CD4-positive, alpha-beta T cell (primary cell): ENCODE measurements at regions of chr1 and their contacts with region 1.

Region 1: GRCh38 chr1:25819576-25820246 is at the start of gene MTFR1L:
- DNase-seq: peak; percentile 87 to 97 (median 93)
- ATAC-seq: peak; percentile 85
- H3K4me3 ChIP-seq: peak within 1 kb of the TSS; percentile 97
- H3K4me3 Mint-ChIP-seq: peak within 1 kb of the TSS; percentile 98
- H3K27ac ChIP-seq: peak within 1 kb of the TSS; percentile 88 to 89
- H3K27ac Mint-ChIP-seq: peak within 1 kb of the TSS; percentile 97
- H3K4me1 ChIP-seq: peaks cover 44% of the 10 kb centered on the region
- H3K4me1 Mint-ChIP-seq: peaks cover 49% of the 10 kb centered on the region
- H3K27me3 ChIP-seq: no peaks in the 10 kb centered on the region
- H3K27me3 Mint-ChIP-seq: no peaks in the 10 kb centered on the region
- CTCF ChIP-seq: no peak
- total RNA-seq, gene MTFR1L: 25.5 to 28.0 TPM

Region 2: GRCh38 chr1:25247024-25247828 is 572.5 kb before region 1 on chr1 and contains the start of gene RSRP1:
- CTCF ChIA-PET with region 1: no interaction called
- POLR2A ChIA-PET with region 1: interaction called, 15 read pairs
- intact Hi-C with region 1: loop called in 1 of 2 experiments (anchors 5 kb)
- DNase-seq: peak; percentile 99 to 100 (median 100)
- ATAC-seq: peak; percentile 84
- H3K4me3 ChIP-seq: peak within 1 kb of the TSS; percentile 97
- H3K4me3 Mint-ChIP-seq: peak within 1 kb of the TSS; percentile 97
- H3K27ac ChIP-seq: peak within 1 kb of the TSS; percentile 98 to 99
- H3K27ac Mint-ChIP-seq: peak within 1 kb of the TSS; percentile 99
- H3K4me1 ChIP-seq: peaks cover 29% of the 10 kb centered on the region
- H3K4me1 Mint-ChIP-seq: peaks cover 60% of the 10 kb centered on the region
- H3K27me3 ChIP-seq: no peaks in the 10 kb centered on the region
- H3K27me3 Mint-ChIP-seq: peaks cover 5% of the 10 kb centered on the region
- CTCF ChIP-seq: no peak
- total RNA-seq, gene RSRP1: 395 to 428 TPM

Region 3: DNA sequence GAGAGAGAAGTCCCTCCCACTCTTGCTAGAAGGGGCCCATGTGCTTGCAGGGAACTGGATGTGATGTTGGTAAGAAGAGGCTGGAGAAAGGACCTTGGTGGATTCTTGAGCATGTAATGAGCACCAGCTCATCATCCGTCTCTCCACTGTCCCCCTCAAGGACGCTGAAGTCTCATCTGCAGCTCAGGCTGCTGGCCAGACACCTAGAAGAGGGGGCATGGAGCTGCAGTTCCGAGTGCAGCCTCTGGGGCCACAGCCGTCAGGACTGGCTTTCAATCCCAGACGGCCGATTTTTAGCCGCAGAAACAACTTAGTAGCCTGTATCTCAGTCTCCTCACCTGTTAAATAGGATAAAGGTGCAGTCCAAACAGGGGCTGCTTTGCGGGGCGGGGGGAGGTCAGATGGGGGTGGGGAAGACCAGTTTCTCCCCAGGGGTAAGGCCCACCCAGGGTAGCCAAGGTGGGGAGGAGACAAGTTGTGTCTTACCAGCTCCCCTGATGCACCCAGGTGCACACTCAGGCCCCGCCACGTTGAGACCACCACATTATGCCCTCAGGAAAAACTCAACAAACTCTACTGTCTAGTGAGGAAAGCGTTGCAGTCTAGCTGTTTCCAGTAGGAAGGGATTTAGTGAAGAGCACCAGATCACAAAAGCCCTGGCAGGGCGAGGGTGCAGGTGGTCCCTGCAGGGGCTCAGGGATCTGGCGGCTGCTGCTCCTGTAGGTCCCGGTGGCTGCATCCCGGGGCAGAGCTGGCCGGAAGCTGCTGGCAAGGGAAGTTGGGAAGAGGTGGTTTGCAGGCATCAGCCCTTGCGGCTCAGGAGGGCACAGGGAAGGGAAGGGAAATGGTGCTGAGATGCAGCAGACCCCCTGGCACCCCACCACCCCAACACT is 246.8 kb before region 1 on chr1:
- CTCF ChIA-PET with region 1: no interaction called
- POLR2A ChIA-PET with region 1: interaction called, 10 read pairs
- intact Hi-C with region 1: no loop called
- DNase-seq: peak in 13 of 14 experiments; percentile 31 to 73 (median 42)
- ATAC-seq: peak; percentile 82
- H3K4me3 ChIP-seq: no peak overlapping the region
- H3K4me3 Mint-ChIP-seq: no peak overlapping the region
- H3K27ac ChIP-seq: peak overlapping the region in 1 of 2 donors; percentile 8
- H3K27ac Mint-ChIP-seq: peak overlapping the region; percentile 87
- H3K4me1 ChIP-seq: peaks cover 58% of the 10 kb centered on the region
- H3K4me1 Mint-ChIP-seq: peaks cover 55% of the 10 kb centered on the region
- H3K27me3 ChIP-seq: no peaks in the 10 kb centered on the region
- H3K27me3 Mint-ChIP-seq: no peaks in the 10 kb centered on the region
- CTCF ChIP-seq: peak; percentile 73

Region 4: DNA sequence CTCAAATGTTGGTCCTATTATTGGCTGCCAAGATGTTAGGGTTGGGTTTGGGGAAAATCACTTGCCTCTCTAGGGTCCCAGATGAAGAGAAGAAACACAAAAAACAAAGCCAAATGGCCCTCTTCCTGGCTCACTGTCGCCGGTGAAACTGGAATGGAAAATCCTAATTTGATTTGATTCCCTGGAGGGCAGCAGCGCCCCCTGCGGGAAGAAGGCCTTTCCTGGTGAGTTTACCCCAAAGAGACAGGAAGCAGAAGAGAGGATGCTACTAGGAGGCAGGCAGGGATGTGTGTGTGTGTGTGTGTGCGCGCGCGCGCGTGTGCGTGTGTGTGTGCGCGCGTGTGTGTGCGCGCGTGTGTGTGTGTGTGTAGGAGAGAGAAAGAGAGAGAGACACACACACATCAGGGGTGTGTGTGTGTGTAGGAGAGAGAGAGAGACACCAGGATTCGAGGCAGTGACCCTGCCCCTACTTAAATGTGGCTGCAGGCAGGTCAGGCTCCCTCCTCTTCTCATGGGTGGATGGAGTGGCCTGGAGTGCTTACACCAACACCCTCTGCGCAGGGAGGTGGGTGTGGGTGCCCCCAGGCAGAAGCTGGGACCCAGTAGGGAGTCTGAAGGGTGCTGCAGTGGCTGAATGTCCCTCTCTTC is 22.8 kb before region 1 on chr1:
- CTCF ChIA-PET with region 1: interaction called, 3 read pairs
- POLR2A ChIA-PET with region 1: interaction called, 17 read pairs
- intact Hi-C with region 1: no loop called
- DNase-seq: peak; percentile 75 to 92 (median 82)
- ATAC-seq: peak; percentile 65
- H3K4me3 ChIP-seq: no peak overlapping the region
- H3K4me3 Mint-ChIP-seq: peak overlapping the region; percentile 85
- H3K27ac ChIP-seq: peak overlapping the region; percentile 44 to 47
- H3K27ac Mint-ChIP-seq: peak overlapping the region; percentile 89
- H3K4me1 ChIP-seq: peaks cover 67% of the 10 kb centered on the region
- H3K4me1 Mint-ChIP-seq: peaks cover 67% of the 10 kb centered on the region
- H3K27me3 ChIP-seq: no peaks in the 10 kb centered on the region
- H3K27me3 Mint-ChIP-seq: no peaks in the 10 kb centered on the region
- CTCF ChIP-seq: peak; percentile 75

Region 5: GRCh38 chr1:25858906-25859789 is 39.4 kb after region 1 on chr1 and contains the start of gene AUNIP:
- CTCF ChIA-PET with region 1: no interaction called
- POLR2A ChIA-PET with region 1: interaction called, 8 read pairs
- intact Hi-C with region 1: loop called in 1 of 2 experiments (anchors 2 kb)
- DNase-seq: peak; percentile 78 to 97 (median 87)
- ATAC-seq: peak; percentile 99
- H3K4me3 ChIP-seq: peak within 1 kb of the TSS; percentile 72
- H3K4me3 Mint-ChIP-seq: peak within 1 kb of the TSS; percentile 86
- H3K27ac ChIP-seq: peak within 1 kb of the TSS; percentile 31 to 58
- H3K27ac Mint-ChIP-seq: peak within 1 kb of the TSS; percentile 87
- H3K4me1 ChIP-seq: peaks cover 22% of the 10 kb centered on the region
- H3K4me1 Mint-ChIP-seq: peaks cover 20% of the 10 kb centered on the region
- H3K27me3 ChIP-seq: no peaks in the 10 kb centered on the region
- H3K27me3 Mint-ChIP-seq: no peaks in the 10 kb centered on the region
- CTCF ChIP-seq: no peak
- total RNA-seq, gene AUNIP: not detected

Region 6: GRCh38 chr1:25895365-25895993 is 75.8 kb after region 1 on chr1:
- CTCF ChIA-PET with region 1: interaction called, 7 read pairs
- POLR2A ChIA-PET with region 1: interaction called, 12 read pairs
- intact Hi-C with region 1: loop called in 1 of 2 experiments (anchors 5 kb)
- DNase-seq: peak; percentile 86 to 96 (median 88)
- ATAC-seq: peak; percentile 100
- H3K4me3 ChIP-seq: no peak overlapping the region
- H3K4me3 Mint-ChIP-seq: no peak overlapping the region
- H3K27ac ChIP-seq: no peak overlapping the region
- H3K27ac Mint-ChIP-seq: peak overlapping the region; percentile 24
- H3K4me1 ChIP-seq: peaks cover 10% of the 10 kb centered on the region
- H3K4me1 Mint-ChIP-seq: peaks cover 9% of the 10 kb centered on the region
- H3K27me3 ChIP-seq: no peaks in the 10 kb centered on the region
- H3K27me3 Mint-ChIP-seq: no peaks in the 10 kb centered on the region
- CTCF ChIP-seq: peak; percentile 98

Region 7: DNA sequence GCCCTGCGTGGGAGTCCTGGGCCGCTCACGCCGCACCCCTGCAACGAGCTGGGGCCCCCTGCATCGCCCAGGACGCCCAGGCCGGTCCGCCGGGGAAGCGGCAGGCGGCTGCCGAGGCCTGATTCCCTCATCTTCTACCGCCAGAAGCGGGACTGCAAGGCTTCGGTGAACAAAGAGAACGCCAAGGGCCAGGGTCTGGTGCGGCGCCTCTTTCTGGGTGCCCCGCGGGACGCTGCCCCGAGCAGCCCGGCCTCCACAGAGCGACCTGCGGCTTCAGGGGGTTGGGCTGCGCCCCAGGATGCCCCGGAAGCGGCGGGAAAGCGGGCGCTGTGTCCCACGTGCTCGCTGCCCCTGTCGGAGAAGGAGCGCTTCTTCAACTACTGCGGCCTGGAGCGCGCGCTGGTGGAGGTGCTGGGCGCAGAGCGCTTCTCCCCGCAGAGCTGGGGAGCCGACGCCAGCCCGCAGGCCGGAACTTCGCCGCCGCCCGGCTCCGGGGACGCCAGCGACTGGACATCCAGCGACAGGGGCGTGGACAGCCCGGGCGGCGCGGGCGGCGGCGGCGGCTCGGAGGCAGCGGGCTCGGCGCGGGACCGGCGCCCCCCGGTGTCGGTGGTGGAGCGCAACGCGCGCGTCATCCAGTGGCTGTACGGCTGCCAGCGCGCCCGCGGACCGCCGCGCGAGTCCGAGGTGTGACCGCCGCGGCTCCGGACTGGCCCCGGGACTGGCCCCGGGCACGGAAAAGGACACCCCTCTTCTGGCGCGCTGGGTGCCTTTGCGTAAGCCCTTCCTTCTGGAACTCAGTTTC is 341.9 kb after region 1 on chr1:
- CTCF ChIA-PET with region 1: no interaction called
- POLR2A ChIA-PET with region 1: no interaction called
- intact Hi-C with region 1: no loop called
- DNase-seq: peak in 10 of 14 experiments; percentile 16 to 65 (median 32)
- ATAC-seq: peak; percentile 63
- H3K4me3 ChIP-seq: peak overlapping the region; percentile 12
- H3K4me3 Mint-ChIP-seq: peak overlapping the region; percentile 58
- H3K27ac ChIP-seq: no peak overlapping the region
- H3K27ac Mint-ChIP-seq: no peak overlapping the region
- H3K4me1 ChIP-seq: peaks cover 29% of the 10 kb centered on the region
- H3K4me1 Mint-ChIP-seq: peaks cover 5% of the 10 kb centered on the region
- H3K27me3 ChIP-seq: peaks cover 26 to 44% of the 10 kb centered on the region in 2 experiments
- H3K27me3 Mint-ChIP-seq: peaks cover 39% of the 10 kb centered on the region
- CTCF ChIP-seq: no peak